ENCODE measurements at regions of chr13 and their contacts with region 1.

Region 1: DNA sequence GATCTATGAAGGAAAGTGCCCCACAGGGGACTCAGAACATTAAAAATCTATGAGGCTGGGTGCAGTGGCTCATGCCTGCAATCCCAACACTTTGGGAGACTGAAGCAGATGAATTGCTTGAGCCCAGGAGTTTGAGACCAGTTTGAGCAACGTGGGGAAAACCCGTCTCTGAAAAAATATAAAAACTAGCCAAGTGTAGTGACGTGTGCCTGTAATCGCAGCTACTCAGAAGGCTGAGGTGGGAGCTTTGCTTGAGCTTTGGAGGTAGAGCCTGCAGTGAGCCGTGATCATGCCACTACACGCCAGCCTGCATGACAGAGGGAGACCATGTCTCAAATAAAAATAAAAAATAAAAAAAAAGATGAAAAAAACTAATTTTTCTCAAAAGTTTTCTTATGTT is 1070.6 kb downstream of the PCDH9 start:
- DNase-seq: no peak
- H3K4me3 ChIP-seq: no peak overlapping the region
- H3K4me3 Mint-ChIP-seq: no peak overlapping the region
- H3K27ac Mint-ChIP-seq: no peak overlapping the region
- H3K4me1 ChIP-seq: no peaks in the 10 kb centered on the region
- H3K4me1 Mint-ChIP-seq: no peaks in the 10 kb centered on the region
- H3K27me3 ChIP-seq: no peaks in the 10 kb centered on the region
- H3K27me3 Mint-ChIP-seq: peaks cover 4% of the 10 kb centered on the region
- CTCF ChIP-seq: no peak

Region 2: DNA sequence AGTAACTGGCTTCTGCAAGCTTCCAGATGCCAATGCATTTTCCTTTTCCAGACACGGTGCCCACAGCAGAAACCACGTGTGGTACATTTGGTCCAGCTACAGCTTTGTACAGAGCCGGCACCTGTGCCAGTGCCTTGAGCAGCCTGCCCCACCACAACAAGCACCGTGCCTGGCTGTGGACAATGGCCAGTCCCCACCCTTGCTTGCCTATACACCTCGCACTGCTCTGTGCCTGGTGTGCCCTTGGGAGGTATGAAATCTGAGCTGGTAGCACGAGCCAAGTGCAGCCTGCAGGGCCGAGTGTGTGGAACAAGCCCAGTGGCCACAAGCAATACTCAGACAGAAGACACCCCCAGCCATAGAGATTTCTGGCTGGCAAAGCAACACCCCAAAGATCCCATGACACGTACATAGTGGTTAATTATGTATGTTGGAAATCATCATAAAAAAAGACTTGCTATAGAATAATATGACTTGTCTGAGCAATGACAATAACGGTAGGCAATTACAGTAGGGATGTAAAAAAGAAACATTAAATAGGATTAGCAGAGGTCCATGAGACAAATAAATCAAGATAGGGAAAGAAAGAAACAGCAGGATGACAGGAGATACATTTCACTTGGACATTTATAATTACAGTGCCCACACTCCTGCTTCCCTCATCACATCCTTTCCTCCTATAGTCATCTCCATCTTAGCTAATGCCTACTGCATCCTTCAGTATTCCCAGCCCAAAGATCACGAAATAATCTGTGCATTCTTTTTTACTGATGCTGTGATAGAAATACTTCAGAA is 328.9 kb before region 1 on chr13:
- CTCF ChIA-PET with region 1: no interaction called
- POLR2A ChIA-PET with region 1: no interaction called
- intact Hi-C with region 1: no loop called
- DNase-seq: no peak
- H3K4me3 ChIP-seq: no peak overlapping the region
- H3K4me3 Mint-ChIP-seq: no peak overlapping the region
- H3K27ac Mint-ChIP-seq: no peak overlapping the region
- H3K4me1 ChIP-seq: no peaks in the 10 kb centered on the region
- H3K4me1 Mint-ChIP-seq: no peaks in the 10 kb centered on the region
- H3K27me3 ChIP-seq: no peaks in the 10 kb centered on the region
- H3K27me3 Mint-ChIP-seq: no peaks in the 10 kb centered on the region
- CTCF ChIP-seq: no peak

Region 3: DNA sequence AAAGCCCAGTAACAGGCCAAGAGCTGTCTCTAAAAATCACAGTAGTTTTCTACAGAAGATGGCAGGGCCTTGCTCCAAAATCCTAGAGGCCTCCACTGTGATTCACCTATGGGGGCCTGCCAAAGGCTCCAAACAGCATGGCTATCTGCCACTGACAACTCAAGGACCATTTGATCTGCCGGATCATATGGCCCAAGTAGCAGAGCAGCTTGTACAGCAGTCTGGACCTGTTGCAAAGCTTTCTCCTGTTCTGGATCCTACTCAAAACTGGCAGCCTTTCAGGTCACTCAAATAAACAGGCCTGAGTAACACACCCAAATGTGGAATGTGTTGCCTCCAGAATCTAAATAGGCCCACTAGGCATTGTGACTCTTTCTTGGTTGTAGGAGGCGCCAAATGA is 21.3 kb after region 1 on chr13:
- CTCF ChIA-PET with region 1: no interaction called
- POLR2A ChIA-PET with region 1: no interaction called
- intact Hi-C with region 1: loop called (anchors 1 kb)
- DNase-seq: no peak
- H3K4me3 ChIP-seq: no peak overlapping the region
- H3K4me3 Mint-ChIP-seq: no peak overlapping the region
- H3K27ac Mint-ChIP-seq: no peak overlapping the region
- H3K4me1 ChIP-seq: no peaks in the 10 kb centered on the region
- H3K4me1 Mint-ChIP-seq: no peaks in the 10 kb centered on the region
- H3K27me3 ChIP-seq: no peaks in the 10 kb centered on the region
- H3K27me3 Mint-ChIP-seq: no peaks in the 10 kb centered on the region
- CTCF ChIP-seq: no peak

Region 4: DNA sequence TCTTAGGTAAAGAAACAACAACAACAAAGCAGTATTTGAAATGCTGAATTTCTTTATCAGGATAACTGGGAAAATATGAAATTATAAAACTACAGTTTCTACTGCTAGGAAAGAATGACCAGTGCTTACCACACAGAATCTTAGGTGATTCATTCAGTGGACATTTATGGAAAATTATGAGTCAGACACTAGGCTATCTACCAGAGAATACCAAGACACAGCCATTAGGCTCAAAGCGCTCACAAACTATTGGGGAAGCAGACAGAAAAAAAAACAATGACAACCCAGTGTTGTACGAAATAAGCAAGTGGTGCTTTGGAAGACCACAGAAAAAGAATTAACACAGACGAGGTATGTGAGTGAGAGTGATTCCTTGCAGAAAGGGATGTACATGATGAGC is 51.2 kb after region 1 on chr13:
- CTCF ChIA-PET with region 1: no interaction called
- POLR2A ChIA-PET with region 1: no interaction called
- intact Hi-C with region 1: no loop called
- DNase-seq: no peak
- H3K4me3 ChIP-seq: no peak overlapping the region
- H3K4me3 Mint-ChIP-seq: no peak overlapping the region
- H3K27ac Mint-ChIP-seq: no peak overlapping the region
- H3K4me1 ChIP-seq: no peaks in the 10 kb centered on the region; the same call in 1 of the 2 replicates
- H3K4me1 Mint-ChIP-seq: no peaks in the 10 kb centered on the region
- H3K27me3 ChIP-seq: no peaks in the 10 kb centered on the region
- H3K27me3 Mint-ChIP-seq: peaks cover 3% of the 10 kb centered on the region
- CTCF ChIP-seq: no peak

Region 5: DNA sequence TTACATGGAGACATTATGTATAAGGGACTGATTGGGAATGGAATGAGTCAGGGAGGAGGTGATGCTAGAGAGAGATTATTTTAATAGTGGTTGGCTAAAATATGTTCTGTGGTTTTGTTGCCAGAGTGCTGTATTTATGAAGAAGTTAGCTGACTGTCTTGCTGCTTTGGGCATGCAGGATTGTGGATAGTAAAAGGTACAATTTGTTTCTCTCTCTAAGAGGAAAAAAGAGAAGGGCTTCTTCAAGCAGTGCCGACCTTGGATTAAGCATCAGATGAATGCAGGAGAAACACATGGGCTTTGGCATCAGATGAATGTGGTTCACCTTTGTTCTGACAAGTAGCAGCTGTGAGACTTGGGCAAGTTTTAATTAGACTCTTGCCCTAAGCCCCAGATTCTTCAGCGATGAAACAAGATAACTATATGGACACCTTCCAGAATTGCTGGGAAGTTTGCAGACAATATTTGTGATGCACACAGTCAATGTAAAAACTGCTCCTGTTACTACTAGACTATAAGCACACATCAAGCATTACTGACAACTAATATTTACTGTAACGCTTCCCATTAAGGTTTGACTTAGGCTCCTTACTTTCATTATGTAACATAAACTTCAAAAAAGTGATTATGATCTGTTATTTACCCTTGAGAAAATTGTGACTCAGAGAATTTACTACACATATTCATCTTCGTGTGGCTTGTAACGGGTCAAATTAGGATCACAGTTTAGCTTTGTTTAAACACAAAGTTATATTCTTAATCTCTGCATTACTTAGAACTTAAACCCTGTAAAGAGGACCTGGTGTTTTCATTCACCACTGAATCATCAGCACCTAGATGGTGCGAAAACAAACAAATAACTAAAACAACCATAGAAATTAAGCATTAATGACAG is 246.6 kb after region 1 on chr13:
- CTCF ChIA-PET with region 1: no interaction called
- POLR2A ChIA-PET with region 1: no interaction called
- intact Hi-C with region 1: no loop called
- DNase-seq: no peak
- H3K4me3 ChIP-seq: no peak overlapping the region
- H3K4me3 Mint-ChIP-seq: no peak overlapping the region
- H3K27ac Mint-ChIP-seq: no peak overlapping the region
- H3K4me1 ChIP-seq: no peaks in the 10 kb centered on the region
- H3K4me1 Mint-ChIP-seq: no peaks in the 10 kb centered on the region
- H3K27me3 ChIP-seq: no peaks in the 10 kb centered on the region
- H3K27me3 Mint-ChIP-seq: peaks cover 10% of the 10 kb centered on the region
- CTCF ChIP-seq: no peak